Transverse colon (tissue), 4 donors: ENCODE measurements at regions of chr16 and their contacts with region 1.

Region 1: DNA sequence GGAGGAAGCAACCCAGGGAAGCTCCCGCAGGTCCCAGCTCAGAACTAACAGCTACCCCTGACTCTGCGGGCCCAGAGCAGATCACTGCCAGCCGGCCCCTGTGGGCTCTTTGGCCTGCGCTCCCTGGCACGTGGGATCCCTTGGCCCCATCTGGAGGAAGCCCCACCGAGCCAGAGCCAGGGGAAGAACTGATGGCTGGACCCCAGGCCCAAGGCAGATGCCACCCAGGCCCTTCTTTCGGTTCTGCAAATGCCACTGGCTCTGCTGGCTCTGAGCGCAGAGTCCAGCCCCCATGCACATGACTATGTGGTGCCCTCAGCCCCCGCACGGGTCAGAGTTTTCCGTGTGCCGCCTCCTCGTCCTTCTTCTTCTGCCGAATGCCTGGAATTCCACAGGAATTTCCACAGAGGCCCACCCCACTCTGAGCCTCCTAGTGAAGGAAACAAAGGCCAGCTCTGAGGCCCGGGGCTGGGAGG is 35.8 kb upstream of the SNN start:
- DNase-seq: peak; percentile 35
- H3K4me3 ChIP-seq: no peak overlapping the region
- H3K27ac ChIP-seq: peak overlapping the region; percentile 43 to 61 (median 58)
- H3K4me1 ChIP-seq: peaks cover 0 to 51% (median 19%) of the 10 kb centered on the region in 4 donors
- H3K27me3 ChIP-seq: no peaks in the 10 kb centered on the region
- CTCF ChIP-seq: no peak
- EP300 ChIP-seq: no peak
- POLR2A ChIP-seq: no peak

Region 2: GRCh38 chr16:11586856-11587642 is 45.5 kb before region 1 on chr16 and contains the start of gene LITAF:
- in situ Hi-C with region 1: no loop called
- intact Hi-C with region 1: loop called (anchors 5 kb)
- DNase-seq: peak; percentile 76
- H3K4me3 ChIP-seq: peak within 1 kb of the TSS; percentile 71 to 95 (median 78)
- H3K27ac ChIP-seq: peak within 1 kb of the TSS; percentile 91 to 95 (median 92)
- H3K4me1 ChIP-seq: peaks cover 6 to 48% (median 44%) of the 10 kb centered on the region in 4 donors
- H3K27me3 ChIP-seq: no peaks in the 10 kb centered on the region
- CTCF ChIP-seq: no peak
- EP300 ChIP-seq: no peak
- POLR2A ChIP-seq: peak; percentile 52
- total RNA-seq, gene LITAF: 32.8 to 193 (median 101) TPM

Region 3: GRCh38 chr16:11806721-11807120 is 174.2 kb after region 1 on chr16:
- in situ Hi-C with region 1: no loop called
- intact Hi-C with region 1: no loop called
- DNase-seq: no peak
- H3K4me3 ChIP-seq: no peak overlapping the region
- H3K27ac ChIP-seq: no peak overlapping the region
- H3K4me1 ChIP-seq: no peaks in the 10 kb centered on the region
- H3K27me3 ChIP-seq: no peaks in the 10 kb centered on the region
- CTCF ChIP-seq: no peak
- EP300 ChIP-seq: no peak
- POLR2A ChIP-seq: no peak